Activated CD4-positive, alpha-beta memory T cell treated with anti-CD3 and anti-CD28 coated beads, Interleukin-2, amount 10 ng/mL, durations not matched to agents 7 days and 5 days (primary cell): ENCODE measurements at regions of chr4 and their contacts with region 1.

Region 1: GRCh38 chr4:26860157-26860921 is at the start of gene STIM2:
- DNase-seq: peak; percentile 99
- H3K4me3 Mint-ChIP-seq: peak within 1 kb of the TSS; percentile 87
- H3K27ac Mint-ChIP-seq: peak within 1 kb of the TSS; percentile 96
- H3K4me1 Mint-ChIP-seq: peaks cover 55% of the 10 kb centered on the region
- H3K27me3 Mint-ChIP-seq: no peaks in the 10 kb centered on the region
- total RNA-seq, gene STIM2: 53.3 to 58.7 TPM

Region 2: GRCh38 chr4:26583865-26584652 is 276.3 kb before region 1 on chr4 and contains the start of gene TBC1D19:
- CTCF ChIA-PET with region 1: interaction called, 11 read pairs
- POLR2A ChIA-PET with region 1: interaction called, 20 read pairs
- DNase-seq: peak; percentile 91
- H3K4me3 Mint-ChIP-seq: peak within 1 kb of the TSS; percentile 90
- H3K27ac Mint-ChIP-seq: peak within 1 kb of the TSS; percentile 86
- H3K4me1 Mint-ChIP-seq: peaks cover 33% of the 10 kb centered on the region
- H3K27me3 Mint-ChIP-seq: no peaks in the 10 kb centered on the region
- total RNA-seq, gene TBC1D19: 5.6 to 7.1 TPM

Region 3: DNA sequence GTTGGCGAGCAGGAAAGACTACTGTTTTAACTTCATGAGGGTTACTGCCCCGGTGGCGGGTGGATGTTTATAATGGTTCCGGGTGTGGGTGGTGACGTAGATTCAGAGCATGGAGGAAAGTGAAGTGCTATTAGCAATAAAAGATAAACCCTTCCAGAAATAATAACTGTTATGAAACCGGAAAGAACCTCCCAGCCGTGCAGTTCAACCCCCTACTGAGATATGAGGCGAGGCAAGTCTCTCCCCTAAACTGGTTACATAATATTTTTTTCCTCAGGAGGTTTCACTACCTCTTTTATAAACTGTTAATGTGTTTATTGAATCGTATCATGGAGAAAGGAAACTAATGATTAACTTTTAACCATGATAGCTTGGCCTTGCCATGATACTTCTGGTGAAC is 33.6 kb before region 1 on chr4:
- CTCF ChIA-PET with region 1: no interaction called
- POLR2A ChIA-PET with region 1: no interaction called
- DNase-seq: no peak
- H3K4me3 Mint-ChIP-seq: no peak overlapping the region
- H3K27ac Mint-ChIP-seq: no peak overlapping the region
- H3K4me1 Mint-ChIP-seq: peaks cover 18% of the 10 kb centered on the region
- H3K27me3 Mint-ChIP-seq: peaks cover 1% of the 10 kb centered on the region

Region 4: DNA sequence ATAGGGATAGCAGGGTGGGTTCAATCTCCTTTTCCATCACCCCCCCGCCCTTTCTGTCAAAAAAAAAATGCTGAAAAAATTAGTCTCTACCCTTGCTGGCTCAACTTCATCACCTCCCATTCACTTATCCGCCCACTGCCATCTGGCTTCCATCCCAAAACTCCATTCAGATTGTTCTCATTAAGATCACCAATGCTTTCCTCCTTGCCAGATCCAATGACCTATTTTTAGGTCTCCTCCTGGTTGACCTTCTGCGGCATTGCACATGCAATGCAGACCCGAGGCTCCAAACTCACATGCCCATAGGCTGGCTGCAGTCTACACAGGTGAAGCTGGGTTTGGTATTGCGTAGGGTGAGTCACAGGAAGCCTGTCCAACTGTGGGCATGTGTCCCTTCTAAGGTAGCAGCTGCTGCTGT is 20.8 kb before region 1 on chr4:
- CTCF ChIA-PET with region 1: no interaction called
- POLR2A ChIA-PET with region 1: no interaction called
- DNase-seq: no peak
- H3K4me3 Mint-ChIP-seq: no peak overlapping the region
- H3K27ac Mint-ChIP-seq: no peak overlapping the region
- H3K4me1 Mint-ChIP-seq: peaks cover 5% of the 10 kb centered on the region
- H3K27me3 Mint-ChIP-seq: no peaks in the 10 kb centered on the region

Region 5: DNA sequence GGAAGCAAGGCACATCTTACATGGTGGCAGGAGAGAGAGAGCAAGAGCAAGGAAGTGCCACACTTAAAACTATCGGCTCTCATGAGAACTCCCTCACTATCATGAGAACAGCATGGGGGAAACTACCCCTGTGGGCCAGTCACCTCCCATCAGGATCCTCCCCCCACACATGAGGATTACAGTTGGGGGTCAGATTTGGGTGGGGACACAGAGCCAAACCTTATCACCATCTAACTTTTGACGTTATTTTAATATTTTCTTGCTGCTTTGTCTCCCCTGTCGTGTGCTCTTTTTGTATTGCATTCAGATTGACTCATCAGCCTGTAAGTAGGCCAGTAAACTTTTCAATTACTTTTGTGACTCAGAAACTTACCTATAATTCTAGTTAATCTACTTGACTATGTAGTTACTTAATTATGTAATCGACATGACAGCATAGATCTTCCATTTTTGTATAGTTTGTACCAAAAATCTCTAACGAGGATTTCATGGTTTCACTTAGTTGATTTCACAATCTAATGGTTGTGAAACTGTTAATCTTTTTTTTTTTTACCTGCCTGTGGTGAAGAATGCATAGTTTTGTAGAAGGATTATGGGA is 18.6 kb after region 1 on chr4:
- CTCF ChIA-PET with region 1: interaction called, 57 read pairs
- POLR2A ChIA-PET with region 1: interaction called, 259 read pairs
- DNase-seq: no peak
- H3K4me3 Mint-ChIP-seq: peak overlapping the region; percentile 28
- H3K27ac Mint-ChIP-seq: peak overlapping the region; percentile 71
- H3K4me1 Mint-ChIP-seq: peaks cover 65% of the 10 kb centered on the region
- H3K27me3 Mint-ChIP-seq: no peaks in the 10 kb centered on the region

Region 6: GRCh38 chr4:26936284-26937065 is 76.1 kb after region 1 on chr4:
- CTCF ChIA-PET with region 1: no interaction called
- POLR2A ChIA-PET with region 1: no interaction called
- DNase-seq: no peak
- H3K4me3 Mint-ChIP-seq: no peak overlapping the region
- H3K27ac Mint-ChIP-seq: no peak overlapping the region
- H3K4me1 Mint-ChIP-seq: peaks cover 10% of the 10 kb centered on the region
- H3K27me3 Mint-ChIP-seq: no peaks in the 10 kb centered on the region

Region 7: DNA sequence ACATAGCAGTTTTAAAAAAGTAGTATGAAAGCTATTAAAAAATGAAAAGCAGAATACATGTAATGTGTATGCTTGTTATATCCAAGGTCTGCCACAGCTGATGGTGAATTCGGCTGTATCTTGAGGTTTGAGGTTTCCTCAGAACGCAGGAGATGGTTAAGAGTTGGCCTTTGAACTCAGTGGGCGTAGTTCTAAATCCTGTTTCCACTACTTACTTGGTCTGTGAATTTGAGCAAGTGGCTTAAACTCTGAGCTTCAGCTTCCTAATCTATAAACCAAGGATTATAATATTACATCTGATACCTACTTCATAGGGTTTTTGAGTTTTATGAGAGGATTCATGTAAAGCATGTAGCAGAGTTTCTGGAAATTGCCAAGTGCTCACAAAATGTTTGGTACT is 125.5 kb after region 1 on chr4:
- CTCF ChIA-PET with region 1: no interaction called
- POLR2A ChIA-PET with region 1: interaction called, 16 read pairs
- DNase-seq: peak; percentile 61
- H3K4me3 Mint-ChIP-seq: no peak overlapping the region
- H3K27ac Mint-ChIP-seq: no peak overlapping the region
- H3K4me1 Mint-ChIP-seq: peaks cover 27% of the 10 kb centered on the region
- H3K27me3 Mint-ChIP-seq: no peaks in the 10 kb centered on the region

Region 8: GRCh38 chr4:27010334-27010940 is 150.1 kb after region 1 on chr4:
- CTCF ChIA-PET with region 1: interaction called, 12 read pairs
- POLR2A ChIA-PET with region 1: interaction called, 21 read pairs
- DNase-seq: peak; percentile 65
- H3K4me3 Mint-ChIP-seq: no peak overlapping the region
- H3K27ac Mint-ChIP-seq: no peak overlapping the region
- H3K4me1 Mint-ChIP-seq: peaks cover 10% of the 10 kb centered on the region
- H3K27me3 Mint-ChIP-seq: no peaks in the 10 kb centered on the region